Vagina (tissue), 2 donors: ENCODE measurements at regions of chr4 and their contacts with region 1.

Region 1: GRCh38 chr4:99405433-99406115 is 29.6 kb downstream of the ADH7 start:
- DNase-seq: no peak
- H3K4me3 ChIP-seq: no peak overlapping the region
- H3K27ac ChIP-seq: peak overlapping the region; percentile 45
- H3K4me1 ChIP-seq: peaks cover 12% of the 10 kb centered on the region
- H3K27me3 ChIP-seq: no peaks in the 10 kb centered on the region
- CTCF ChIP-seq: peak; percentile 79 to 96 (median 80)
- POLR2A ChIP-seq: no peak

Region 2: DNA sequence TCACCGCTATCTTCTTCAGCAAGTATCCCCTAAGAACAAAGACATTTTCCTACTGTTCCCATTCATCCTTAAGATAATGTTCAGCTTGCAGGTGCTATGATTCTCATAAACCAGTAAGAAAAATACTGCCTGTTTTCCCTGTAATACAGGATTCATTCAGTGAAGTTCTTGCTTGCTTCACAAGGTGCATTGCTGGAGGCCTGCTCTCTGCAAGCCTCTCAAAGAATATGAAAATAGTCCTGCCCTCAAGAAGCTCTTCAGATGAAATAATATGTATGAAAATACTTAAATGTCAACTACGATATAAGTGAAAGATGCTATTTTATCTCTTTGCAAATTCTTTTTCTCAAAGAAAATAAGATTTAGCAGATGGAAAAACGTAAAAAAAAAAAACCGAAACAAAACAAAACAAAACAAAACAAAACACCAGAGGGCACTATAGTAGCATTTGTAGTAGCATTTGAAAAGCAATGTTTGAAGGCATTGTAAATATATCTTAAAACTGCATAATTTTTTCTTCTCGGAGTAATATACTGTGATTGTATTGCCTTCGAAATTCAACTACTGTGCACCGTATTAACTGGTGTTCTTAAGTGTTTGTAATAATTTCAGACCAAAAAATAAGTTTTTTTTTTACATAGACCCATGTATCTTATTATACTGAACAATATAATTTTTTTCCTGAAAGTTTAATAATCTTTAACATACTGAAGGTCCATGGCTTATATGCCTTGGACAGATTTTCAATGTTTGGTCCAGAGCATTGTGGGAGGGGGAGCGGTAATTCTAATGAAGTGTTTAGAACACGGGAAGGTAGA is 287.5 kb before region 1 on chr4:
- intact Hi-C with region 1: loop called (anchors 2 kb)
- DNase-seq: no peak
- H3K4me3 ChIP-seq: no peak overlapping the region
- H3K27ac ChIP-seq: no peak overlapping the region
- H3K4me1 ChIP-seq: no peaks in the 10 kb centered on the region
- H3K27me3 ChIP-seq: no peaks in the 10 kb centered on the region
- CTCF ChIP-seq: peak in 1 of 3 experiments; percentile 5
- POLR2A ChIP-seq: no peak

Region 3: GRCh38 chr4:99205153-99205979 is 200.2 kb before region 1 on chr4:
- intact Hi-C with region 1: loop called (anchors 5 kb)
- DNase-seq: no peak
- H3K4me3 ChIP-seq: no peak overlapping the region
- H3K27ac ChIP-seq: peak overlapping the region; percentile 28
- H3K4me1 ChIP-seq: peaks cover 19% of the 10 kb centered on the region
- H3K27me3 ChIP-seq: no peaks in the 10 kb centered on the region
- CTCF ChIP-seq: no peak
- POLR2A ChIP-seq: no peak

Region 4: DNA sequence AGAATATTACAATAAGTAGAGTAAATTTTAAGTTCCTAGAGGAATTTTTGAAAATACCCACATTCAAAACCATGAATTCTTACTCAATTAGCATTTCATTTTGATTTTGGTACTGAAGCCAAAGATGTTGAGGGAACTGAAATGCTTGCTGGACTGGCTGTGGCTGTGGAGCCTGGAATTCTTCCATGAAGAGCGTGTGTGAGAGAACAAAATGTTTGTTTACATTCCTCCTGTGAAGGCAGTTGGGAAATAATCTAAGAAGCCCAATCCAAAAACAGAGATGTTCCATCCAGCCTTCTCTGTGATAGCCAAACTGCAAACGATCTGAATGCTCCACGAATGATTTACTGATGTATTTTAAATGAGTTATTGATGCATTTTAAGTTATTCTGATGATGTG is 80.6 kb before region 1 on chr4:
- intact Hi-C with region 1: loop called (anchors 5 kb)
- DNase-seq: no peak
- H3K4me3 ChIP-seq: no peak overlapping the region
- H3K27ac ChIP-seq: peak overlapping the region; percentile 84
- H3K4me1 ChIP-seq: peaks cover 43% of the 10 kb centered on the region
- H3K27me3 ChIP-seq: no peaks in the 10 kb centered on the region
- CTCF ChIP-seq: no peak
- POLR2A ChIP-seq: no peak